Left colon (tissue), 2 donors: ENCODE measurements at regions of chrX and their contacts with region 1.

Region 1: GRCh38 chrX:30275498-30275897 is 28.6 kb downstream of the MAGEB1 start:
- DNase-seq: no peak
- ATAC-seq: no peak

Region 2: GRCh38 chrX:30141966-30142365 is 133.5 kb before region 1 on chrX:
- intact Hi-C with region 1: no loop called
- DNase-seq: no peak
- ATAC-seq: no peak

Region 3: DNA sequence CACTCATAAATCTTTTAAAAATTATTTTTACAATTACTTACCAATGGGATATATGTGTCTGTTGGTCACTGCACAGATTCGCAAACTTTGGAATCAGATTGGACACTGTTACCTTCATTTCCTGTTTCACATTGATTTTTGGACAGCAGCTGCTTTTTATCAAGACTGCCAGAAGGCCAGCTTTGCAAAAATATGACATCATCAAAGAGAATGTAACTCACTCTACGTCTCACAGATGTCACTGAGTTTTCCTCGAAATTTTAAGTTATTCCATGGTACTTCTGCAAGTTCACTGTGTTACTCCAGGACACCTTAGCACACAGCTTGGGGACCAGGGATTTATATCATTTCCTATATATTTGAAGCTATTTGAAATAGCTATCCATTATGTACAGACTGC is 91.9 kb before region 1 on chrX:
- intact Hi-C with region 1: no loop called
- DNase-seq: no peak
- ATAC-seq: no peak

Region 4: DNA sequence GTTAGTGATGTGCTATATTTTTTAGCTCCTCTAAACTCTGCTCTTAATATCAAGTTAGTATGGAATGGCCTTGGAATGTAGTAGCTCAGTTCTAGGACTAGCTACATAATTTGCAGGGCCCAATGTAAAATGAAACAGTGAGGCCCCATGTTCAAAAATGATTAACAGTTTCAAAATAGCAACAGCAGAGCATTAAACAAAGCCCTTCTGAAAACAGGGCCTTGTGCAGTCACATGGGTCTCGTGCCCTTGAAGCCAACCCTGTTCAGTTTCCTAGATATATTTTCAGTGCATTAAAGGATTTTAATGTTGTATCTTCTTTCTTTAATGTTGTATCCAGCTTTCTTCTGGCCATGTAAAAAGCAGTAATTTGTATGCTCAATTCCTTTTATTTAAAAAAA is 220.0 kb after region 1 on chrX:
- intact Hi-C with region 1: loop called in 1 of 2 experiments (anchors 10 kb)
- DNase-seq: no peak
- ATAC-seq: no peak